ENCODE measurements at regions of chr3 and their contacts with region 1.

Region 1: GRCh38 chr3:125165189-125165947 is 47.2 kb downstream of the SLC12A8 start:
- DNase-seq: no peak

Region 2: DNA sequence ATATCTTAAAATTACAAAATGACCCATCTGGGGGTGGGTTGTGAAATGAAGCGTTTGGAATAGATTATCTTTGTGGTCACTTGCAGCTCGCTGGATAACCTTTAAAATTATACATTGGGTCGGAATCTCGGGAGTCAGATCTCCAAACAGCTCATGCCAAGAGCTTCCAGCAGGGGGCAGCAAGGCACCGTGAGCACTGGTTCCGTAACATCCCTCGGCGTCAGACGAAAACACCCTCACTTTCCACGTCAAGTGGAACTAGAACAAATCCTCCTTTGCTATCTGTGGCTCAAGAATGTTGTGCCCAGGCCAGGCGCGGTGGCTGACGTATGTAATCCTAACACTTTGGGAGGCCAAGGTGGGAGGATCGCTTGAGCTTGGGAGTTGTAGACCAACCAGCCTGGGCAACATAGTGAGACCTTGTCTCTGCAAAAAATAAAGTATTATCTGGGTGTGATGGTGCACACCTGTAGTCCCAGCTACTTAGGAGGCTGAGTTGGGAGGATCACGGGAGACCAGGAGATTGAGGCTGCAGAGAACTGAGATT is 404.0 kb before region 1 on chr3:
- intact Hi-C with region 1: loop called (anchors 10 kb)
- DNase-seq: peak; percentile 88

Region 3: DNA sequence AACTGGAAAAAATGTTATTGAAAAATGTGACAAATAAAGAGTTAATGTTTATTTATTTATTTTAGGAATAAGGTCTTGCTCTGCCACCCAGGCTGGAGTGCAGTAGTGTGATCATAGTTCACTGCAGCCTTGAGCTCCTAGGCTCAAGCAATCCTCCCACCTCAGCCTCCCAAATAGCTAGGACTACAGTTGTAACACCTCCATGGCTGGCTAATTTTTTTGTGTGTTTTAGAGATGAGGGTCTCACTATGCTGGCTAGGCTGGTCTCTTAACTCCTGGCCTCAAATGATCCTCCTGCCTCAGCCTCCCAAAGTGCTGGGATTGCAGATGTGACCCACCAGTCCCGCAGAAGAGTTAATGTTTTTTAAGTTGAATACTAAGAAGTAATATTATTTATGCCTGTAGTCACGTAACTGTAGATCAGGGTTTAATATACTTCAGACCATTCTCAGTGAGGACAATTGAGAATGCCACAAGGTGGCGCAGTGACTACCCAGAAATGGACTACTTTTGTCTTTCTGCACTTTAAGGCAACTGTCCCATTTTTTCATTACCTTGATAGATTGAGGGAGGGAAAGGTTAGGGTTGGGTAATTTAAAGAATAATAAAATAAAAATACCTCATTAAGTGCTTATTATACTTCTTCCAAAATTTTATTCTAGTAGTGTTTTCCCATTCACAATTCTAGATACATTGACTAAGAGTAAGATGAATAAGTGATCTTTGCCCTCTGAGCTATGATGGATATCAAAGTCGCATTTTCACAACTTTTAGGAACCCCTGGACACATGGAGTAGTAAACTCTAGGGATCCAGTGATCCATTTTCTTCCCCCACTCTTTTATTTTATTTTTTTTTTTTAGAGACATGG is 236.8 kb before region 1 on chr3:
- intact Hi-C with region 1: loop called (anchors 1 kb)
- DNase-seq: no peak

Region 4: GRCh38 chr3:125141596-125142419 is 23.6 kb before region 1 on chr3:
- intact Hi-C with region 1: loop called (anchors 1 kb)
- DNase-seq: peak; percentile 89

Region 5: DNA sequence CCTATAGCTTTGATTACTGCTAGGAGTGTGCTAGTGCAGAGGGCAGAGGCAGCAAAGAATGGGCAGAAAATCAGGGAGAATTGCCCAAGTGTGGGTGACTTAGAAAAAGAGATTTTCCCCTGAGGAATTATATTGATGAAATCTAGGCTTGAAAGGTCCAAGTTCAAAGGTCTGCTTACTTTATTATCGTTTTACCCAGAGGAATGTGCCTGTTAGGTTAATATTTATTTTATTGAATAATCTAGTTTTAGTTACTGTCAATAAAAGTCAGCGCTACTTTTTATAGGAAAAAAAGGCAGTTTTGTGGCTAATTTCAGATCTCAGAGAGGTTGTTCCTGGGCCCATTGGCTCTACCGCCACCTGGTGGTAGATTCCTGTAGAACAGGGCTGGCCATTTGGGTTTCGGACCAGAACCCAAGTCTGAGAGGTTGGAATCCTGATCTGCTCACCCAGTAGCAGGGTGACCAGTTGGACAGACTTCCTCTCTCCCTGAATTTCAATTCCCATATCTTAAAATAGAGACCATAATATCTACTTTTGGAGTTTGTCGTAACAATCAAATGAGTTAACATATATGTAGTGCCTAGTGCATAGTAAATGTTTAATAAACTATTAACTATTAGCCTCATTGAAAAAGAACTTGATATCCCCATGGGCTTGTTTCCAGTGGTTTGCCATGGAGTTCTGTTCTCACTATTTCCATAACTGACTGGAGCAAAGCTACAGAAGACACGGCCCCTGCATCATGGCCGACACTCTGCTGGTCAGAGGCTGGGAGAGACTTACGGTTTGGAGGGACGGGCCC is 272.5 kb after region 1 on chr3:
- intact Hi-C with region 1: loop called (anchors 5 kb)
- DNase-seq: peak; percentile 69

Measured in cardiac septum (tissue), 1 donor.